ENCODE measurements at regions of chr9 and their contacts with region 1.

Region 1: DNA sequence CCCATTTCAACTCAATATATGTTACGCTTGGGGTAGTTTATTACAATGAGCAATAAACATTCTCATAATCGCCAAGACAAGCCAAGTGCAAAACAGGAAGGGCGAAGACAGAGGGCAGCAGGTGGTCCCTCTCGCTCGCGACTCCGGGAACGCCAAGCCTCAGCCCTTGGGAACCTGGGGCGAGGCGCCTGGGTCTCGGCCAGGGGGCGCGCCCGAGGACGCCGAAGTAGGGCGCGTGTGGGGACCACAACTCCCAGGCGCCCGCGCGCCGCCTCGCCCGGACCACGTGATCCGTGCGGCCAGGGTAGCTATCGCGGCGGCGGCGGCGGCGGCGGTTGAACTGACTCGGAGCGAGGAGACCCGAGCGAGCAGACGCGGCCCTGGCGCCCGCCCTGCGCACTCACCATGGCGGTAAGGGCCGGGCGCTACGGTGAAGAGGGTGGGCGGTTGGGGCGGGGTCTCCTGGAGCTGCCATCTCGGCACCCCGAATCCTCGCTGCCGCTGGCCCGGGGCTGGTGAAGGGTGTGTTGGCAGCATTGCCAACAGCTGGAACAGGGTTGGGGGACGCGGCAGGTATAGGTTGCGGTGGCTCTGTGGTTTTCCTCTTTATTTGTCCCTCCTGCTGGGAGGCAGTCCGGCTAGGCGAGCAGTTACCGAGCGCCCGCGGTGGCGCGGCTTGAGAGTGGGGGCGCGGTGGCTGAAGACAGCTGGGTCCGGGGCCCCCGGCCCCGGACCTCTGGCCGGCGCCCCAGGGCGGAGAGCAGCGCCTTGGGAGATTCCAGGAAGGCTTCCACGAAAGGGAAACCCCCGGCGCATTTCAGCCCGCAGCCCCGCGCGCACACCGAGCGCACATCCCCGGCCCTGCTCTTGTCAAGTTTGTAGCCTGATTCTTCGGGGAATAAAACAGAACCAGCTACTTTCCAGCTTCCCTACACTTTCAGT is at the start of gene SLC31A2:
- DNase-seq: peak; percentile 87
- H3K4me3 ChIP-seq: peak within 1 kb of the TSS; percentile 65 to 96 (median 66)
- H3K27ac ChIP-seq: no peak within 1 kb of the TSS
- H3K4me1 ChIP-seq: no peaks in the 10 kb centered on the region
- H3K27me3 ChIP-seq: peaks cover 5% of the 10 kb centered on the region in 2 experiments
- CTCF ChIP-seq: peak in 1 of 2 donors; percentile 56
- POLR2A ChIP-seq: peak; percentile 63
- total RNA-seq, gene SLC31A2: 3.7 and 4.0 TPM in 2 replicates

Region 2: DNA sequence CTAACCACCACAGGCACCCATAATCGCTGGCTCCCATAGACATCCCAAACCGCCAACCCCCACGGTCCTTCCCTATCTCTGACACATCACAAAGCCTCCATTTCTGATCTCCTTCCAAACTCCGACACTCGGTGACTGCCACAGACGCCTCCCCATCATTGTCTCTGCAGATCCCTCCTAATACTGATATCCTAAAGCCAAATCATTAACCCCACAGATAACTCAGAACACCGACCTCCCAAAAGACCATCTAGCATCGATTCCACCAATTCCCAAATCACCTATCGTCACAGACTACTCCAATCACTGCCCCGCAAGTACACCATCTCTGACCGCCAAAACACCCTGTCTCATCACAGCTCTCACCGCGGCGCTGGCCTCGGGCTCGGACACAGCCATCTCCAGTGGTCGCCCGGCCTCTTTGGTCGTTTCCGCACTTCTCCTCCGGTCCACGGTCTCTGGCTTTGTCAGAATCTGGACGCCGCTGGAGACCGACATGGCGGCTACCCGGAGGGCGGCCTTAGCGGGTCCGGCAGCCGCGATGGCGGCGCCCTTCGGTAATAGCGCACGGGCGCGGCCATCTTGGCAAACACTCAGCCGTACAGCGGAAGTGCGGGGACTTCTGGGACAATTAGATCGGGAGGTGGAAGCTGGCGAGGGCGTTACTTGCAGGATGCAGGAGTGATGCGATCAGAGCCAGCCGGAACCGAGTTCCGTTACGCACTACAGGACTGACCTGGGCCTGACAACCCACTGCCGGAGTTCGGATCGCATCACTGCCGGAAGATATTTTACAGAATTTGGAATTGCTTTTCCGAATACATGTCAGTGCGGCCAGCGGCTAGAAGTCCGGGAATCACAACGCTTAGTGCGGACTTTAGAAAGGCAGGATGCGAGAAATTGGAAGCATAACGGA is 94.5 kb before region 1 on chr9 and contains the start of gene ZFP37:
- CTCF ChIA-PET with region 1: no interaction called
- POLR2A ChIA-PET with region 1: no interaction called
- dilution Hi-C with region 1: no loop called
- intact Hi-C with region 1: loop called (anchors 10 kb)
- DNase-seq: peak; percentile 94
- H3K4me3 ChIP-seq: peak within 1 kb of the TSS; percentile 56 to 73 (median 68)
- H3K27ac ChIP-seq: no peak within 1 kb of the TSS
- H3K4me1 ChIP-seq: peaks cover 3% of the 10 kb centered on the region
- H3K27me3 ChIP-seq: peaks cover 2 to 10% of the 10 kb centered on the region in 2 experiments
- CTCF ChIP-seq: no peak
- POLR2A ChIP-seq: no peak
- total RNA-seq, gene ZFP37: 1.3 and 1.6 TPM in 2 replicates